CD4-positive, alpha-beta T cell (primary cell): ENCODE measurements at regions of chrX and their contacts with region 1.

Region 1: GRCh38 chrX:101595739-101596419 is 21.9 kb downstream of the ARMCX6 start:
- DNase-seq: peak in 7 of 14 experiments; percentile 4 to 77 (median 53)
- ATAC-seq: peak; percentile 74
- H3K4me3 ChIP-seq: no peak overlapping the region
- H3K4me3 Mint-ChIP-seq: no peak overlapping the region
- H3K27ac ChIP-seq: no peak overlapping the region
- H3K27ac Mint-ChIP-seq: no peak overlapping the region
- H3K4me1 ChIP-seq: no peaks in the 10 kb centered on the region
- H3K4me1 Mint-ChIP-seq: no peaks in the 10 kb centered on the region
- H3K27me3 ChIP-seq: peaks cover 2 to 10% of the 10 kb centered on the region in 2 experiments
- H3K27me3 Mint-ChIP-seq: peaks cover 28% of the 10 kb centered on the region
- CTCF ChIP-seq: peak; percentile 63

Region 2: GRCh38 chrX:101619364-101619763 is 23.5 kb after region 1 on chrX:
- CTCF ChIA-PET with region 1: no interaction called
- POLR2A ChIA-PET with region 1: no interaction called
- intact Hi-C with region 1: no loop called
- DNase-seq: no peak
- ATAC-seq: no peak
- H3K4me3 ChIP-seq: no peak overlapping the region
- H3K4me3 Mint-ChIP-seq: peak overlapping the region; percentile 40
- H3K27ac ChIP-seq: no peak overlapping the region
- H3K27ac Mint-ChIP-seq: no peak overlapping the region
- H3K4me1 ChIP-seq: peaks cover 23% of the 10 kb centered on the region
- H3K4me1 Mint-ChIP-seq: peaks cover 39% of the 10 kb centered on the region
- H3K27me3 ChIP-seq: no peaks in the 10 kb centered on the region
- H3K27me3 Mint-ChIP-seq: no peaks in the 10 kb centered on the region
- CTCF ChIP-seq: no peak

Region 3: DNA sequence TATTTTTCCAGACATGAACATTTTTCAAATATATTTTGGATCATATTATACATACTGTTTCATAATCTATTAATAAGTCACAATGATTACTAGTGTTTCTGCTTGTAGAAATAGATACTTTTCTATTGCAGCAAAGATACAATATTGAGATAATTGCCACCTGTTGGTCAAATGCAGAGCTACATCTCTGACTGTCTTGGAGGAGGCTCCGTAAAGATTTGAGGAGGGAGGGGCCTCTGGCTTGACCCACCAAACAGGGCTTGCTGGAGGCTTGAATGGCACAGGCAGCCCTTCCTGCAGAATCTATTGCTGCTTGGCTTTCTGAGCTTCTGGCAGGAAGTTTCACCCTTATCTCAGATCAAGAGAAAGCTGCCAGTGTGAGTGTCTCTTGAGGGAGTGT is 163.1 kb after region 1 on chrX:
- CTCF ChIA-PET with region 1: no interaction called
- POLR2A ChIA-PET with region 1: no interaction called
- intact Hi-C with region 1: loop called (anchors 5 kb)
- DNase-seq: peak in 9 of 14 experiments; percentile 1 to 59 (median 11)
- ATAC-seq: peak; percentile 84
- H3K4me3 ChIP-seq: no peak overlapping the region
- H3K4me3 Mint-ChIP-seq: no peak overlapping the region
- H3K27ac ChIP-seq: no peak overlapping the region
- H3K27ac Mint-ChIP-seq: no peak overlapping the region
- H3K4me1 ChIP-seq: no peaks in the 10 kb centered on the region
- H3K4me1 Mint-ChIP-seq: no peaks in the 10 kb centered on the region
- H3K27me3 ChIP-seq: no peaks in the 10 kb centered on the region
- H3K27me3 Mint-ChIP-seq: no peaks in the 10 kb centered on the region
- CTCF ChIP-seq: peak; percentile 41

Region 4: DNA sequence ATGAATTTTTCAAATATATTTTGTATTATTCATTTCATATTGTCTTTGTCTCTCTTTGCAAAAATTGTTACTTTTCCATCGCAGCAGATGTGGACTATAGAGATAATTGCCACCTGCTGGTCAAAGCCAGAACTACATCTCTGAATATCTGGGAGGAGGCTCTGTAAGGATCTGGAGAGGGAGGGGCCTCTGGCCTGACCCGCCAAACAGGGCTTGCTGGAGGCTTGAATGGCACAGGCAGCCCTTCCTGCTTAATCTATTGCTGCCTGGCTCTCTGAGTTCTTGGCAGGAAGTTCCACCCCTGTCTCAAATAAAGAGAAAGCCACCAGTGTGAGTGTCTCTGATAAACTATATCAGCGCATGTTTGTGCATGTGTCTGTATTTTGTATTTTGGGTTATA is 203.5 kb after region 1 on chrX:
- CTCF ChIA-PET with region 1: no interaction called
- POLR2A ChIA-PET with region 1: no interaction called
- intact Hi-C with region 1: loop called (anchors 5 kb)
- DNase-seq: peak; percentile 51 to 89 (median 70)
- ATAC-seq: peak; percentile 100
- H3K4me3 ChIP-seq: no peak overlapping the region
- H3K4me3 Mint-ChIP-seq: peak overlapping the region; percentile 44
- H3K27ac ChIP-seq: no peak overlapping the region
- H3K27ac Mint-ChIP-seq: peak overlapping the region; percentile 21
- H3K4me1 ChIP-seq: peaks cover 3% of the 10 kb centered on the region
- H3K4me1 Mint-ChIP-seq: peaks cover 12% of the 10 kb centered on the region
- H3K27me3 ChIP-seq: no peaks in the 10 kb centered on the region
- H3K27me3 Mint-ChIP-seq: no peaks in the 10 kb centered on the region
- CTCF ChIP-seq: peak; percentile 57

Region 5: DNA sequence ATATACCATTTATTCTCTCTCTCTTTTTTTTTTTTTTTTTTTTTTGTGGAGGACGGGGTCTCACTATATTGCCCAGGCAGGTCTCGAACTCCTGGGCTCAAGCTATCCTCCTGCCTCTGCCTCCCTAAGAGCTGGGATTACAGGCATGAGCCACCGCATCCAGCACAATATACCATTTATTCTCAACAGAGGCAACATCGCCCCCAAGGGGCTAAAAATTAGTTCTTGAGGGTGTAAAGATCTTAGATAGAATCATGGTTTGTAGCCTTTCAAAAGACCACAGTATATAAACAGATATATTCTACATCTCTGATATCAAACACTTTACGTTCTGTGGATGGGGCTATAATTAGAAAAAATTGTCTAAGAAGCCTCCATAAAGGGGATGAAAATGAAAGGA is 489.8 kb after region 1 on chrX:
- CTCF ChIA-PET with region 1: no interaction called
- POLR2A ChIA-PET with region 1: no interaction called
- intact Hi-C with region 1: loop called in 1 of 2 experiments (anchors 10 kb)
- DNase-seq: peak in 1 of 14 experiments; percentile 6
- ATAC-seq: no peak
- H3K4me3 ChIP-seq: no peak overlapping the region
- H3K4me3 Mint-ChIP-seq: no peak overlapping the region
- H3K27ac ChIP-seq: no peak overlapping the region
- H3K27ac Mint-ChIP-seq: no peak overlapping the region
- H3K4me1 ChIP-seq: no peaks in the 10 kb centered on the region
- H3K4me1 Mint-ChIP-seq: no peaks in the 10 kb centered on the region
- H3K27me3 ChIP-seq: no peaks in the 10 kb centered on the region
- H3K27me3 Mint-ChIP-seq: peaks cover 4% of the 10 kb centered on the region
- CTCF ChIP-seq: no peak

Region 6: GRCh38 chrX:102863735-102864134 is 1267.9 kb after region 1 on chrX:
- CTCF ChIA-PET with region 1: no interaction called
- POLR2A ChIA-PET with region 1: no interaction called
- intact Hi-C with region 1: loop called in 1 of 2 experiments (anchors 10 kb)
- DNase-seq: peak; percentile 63 to 86 (median 76)
- ATAC-seq: peak; percentile 90
- H3K4me3 ChIP-seq: no peak overlapping the region
- H3K4me3 Mint-ChIP-seq: no peak overlapping the region
- H3K27ac ChIP-seq: no peak overlapping the region
- H3K27ac Mint-ChIP-seq: no peak overlapping the region
- H3K4me1 ChIP-seq: no peaks in the 10 kb centered on the region
- H3K4me1 Mint-ChIP-seq: no peaks in the 10 kb centered on the region
- H3K27me3 ChIP-seq: no peaks in the 10 kb centered on the region
- H3K27me3 Mint-ChIP-seq: no peaks in the 10 kb centered on the region
- CTCF ChIP-seq: peak; percentile 79